Activated CD4-positive, alpha-beta T cell treated with anti-CD3 and anti-CD28 coated beads for 36 hours (primary cell): ENCODE measurements at regions of chr2 and their contacts with region 1.

Region 1: DNA sequence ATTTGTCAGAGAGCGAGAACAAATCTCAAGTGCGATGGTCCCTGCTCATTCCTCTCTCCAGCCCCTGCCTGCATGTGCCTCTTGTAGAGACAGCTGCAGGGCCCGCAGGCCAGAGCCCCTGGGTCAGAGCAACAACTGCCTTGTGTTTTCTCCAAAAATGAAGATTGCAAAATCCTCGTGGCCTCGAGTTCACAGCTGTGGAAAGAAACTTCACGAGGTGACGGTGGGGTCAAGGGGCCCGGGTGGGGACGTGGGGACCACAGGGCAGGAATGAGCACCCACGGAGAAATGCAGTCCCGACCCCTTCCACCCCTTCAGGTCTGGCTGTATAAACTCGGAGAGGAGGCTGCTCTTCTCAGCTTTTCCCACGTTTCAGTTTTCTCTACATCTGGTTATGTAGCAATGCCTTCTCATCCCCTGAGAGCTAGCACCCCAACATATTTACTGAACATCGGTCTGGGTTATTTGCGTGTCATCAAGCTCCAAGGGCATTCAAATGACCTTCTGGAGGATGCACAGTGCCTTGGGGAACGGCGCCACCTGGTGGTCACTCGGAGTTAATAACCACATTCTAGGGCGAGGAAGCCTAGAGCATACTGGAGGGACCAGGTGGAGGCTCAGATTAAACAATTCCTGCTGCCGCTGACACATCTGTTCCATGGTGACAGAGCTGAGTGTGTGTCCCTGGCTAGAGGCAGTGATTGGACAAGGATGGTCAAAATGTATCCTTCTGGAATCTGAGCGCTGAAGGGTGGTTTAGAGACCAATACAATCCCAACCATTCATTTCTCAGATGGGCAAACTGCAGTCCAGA is 91.4 kb upstream of the CYRIA start:
- DNase-seq: peak; percentile 85
- ATAC-seq: peak; percentile 95
- H3K4me3 Mint-ChIP-seq: no peak overlapping the region
- H3K27ac Mint-ChIP-seq: peak overlapping the region; percentile 23
- H3K4me1 Mint-ChIP-seq: no peaks in the 10 kb centered on the region
- H3K27me3 Mint-ChIP-seq: peaks cover 5% of the 10 kb centered on the region

Region 2: DNA sequence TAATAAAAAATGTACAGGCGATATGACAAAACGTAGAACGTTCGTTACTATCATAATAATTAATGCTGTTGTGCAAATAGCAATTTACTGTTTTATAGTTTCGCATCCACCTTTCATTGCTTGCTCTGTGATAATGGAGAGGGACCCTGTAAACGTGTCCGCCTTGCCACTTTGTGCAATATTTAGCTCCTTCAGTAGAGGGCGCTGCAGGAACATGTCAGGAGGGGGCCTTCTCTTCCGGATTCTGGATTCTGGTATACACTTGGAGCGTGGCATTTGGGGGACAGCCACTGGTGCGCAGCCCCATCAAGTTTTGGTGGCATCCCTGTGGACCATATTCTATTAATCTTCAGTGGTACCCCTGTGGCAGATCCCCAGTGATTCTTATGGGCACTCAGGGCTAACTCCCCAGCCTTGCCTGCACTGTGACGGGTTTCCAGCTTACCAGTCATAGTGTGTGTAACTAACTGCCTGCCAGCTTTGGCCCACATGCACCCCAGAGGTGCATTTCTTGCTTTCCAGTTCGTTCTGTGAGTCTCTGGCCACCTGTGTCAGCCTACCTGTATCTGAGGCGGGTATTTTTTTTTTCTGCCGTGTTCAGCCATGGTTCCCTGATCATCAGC is 231.7 kb before region 1 on chr2:
- CTCF ChIA-PET with region 1: interaction called, 3 read pairs
- POLR2A ChIA-PET with region 1: no interaction called
- intact Hi-C with region 1: loop called in 1 of 2 experiments (anchors 5 kb)
- DNase-seq: peak; percentile 59
- ATAC-seq: no peak
- H3K4me3 Mint-ChIP-seq: no peak overlapping the region
- H3K27ac Mint-ChIP-seq: no peak overlapping the region
- H3K4me1 Mint-ChIP-seq: no peaks in the 10 kb centered on the region
- H3K27me3 Mint-ChIP-seq: peaks cover 14% of the 10 kb centered on the region

Region 3: GRCh38 chr2:16608661-16609643 is 148.1 kb before region 1 on chr2:
- CTCF ChIA-PET with region 1: interaction called, 55 read pairs
- POLR2A ChIA-PET with region 1: no interaction called
- intact Hi-C with region 1: loop called (anchors 1 kb)
- DNase-seq: peak; percentile 92
- ATAC-seq: peak; percentile 87
- H3K4me3 Mint-ChIP-seq: peak overlapping the region; percentile 74
- H3K27ac Mint-ChIP-seq: peak overlapping the region; percentile 65
- H3K4me1 Mint-ChIP-seq: peaks cover 6% of the 10 kb centered on the region
- H3K27me3 Mint-ChIP-seq: no peaks in the 10 kb centered on the region

Region 4: GRCh38 chr2:16625201-16625729 is 131.8 kb before region 1 on chr2:
- CTCF ChIA-PET with region 1: interaction called, 16 read pairs
- POLR2A ChIA-PET with region 1: no interaction called
- intact Hi-C with region 1: no loop called
- DNase-seq: no peak
- ATAC-seq: no peak
- H3K4me3 Mint-ChIP-seq: no peak overlapping the region
- H3K27ac Mint-ChIP-seq: peak overlapping the region; percentile 48
- H3K4me1 Mint-ChIP-seq: peaks cover 50% of the 10 kb centered on the region
- H3K27me3 Mint-ChIP-seq: no peaks in the 10 kb centered on the region